ENCODE measurements at regions of chr6 and their contacts with region 1.

Region 1: GRCh38 chr6:10694302-10695085 is at the starts of genes C6orf52 and PAK1IP1:
- DNase-seq: peak; percentile 94
- H3K4me3 Mint-ChIP-seq: peak within 1 kb of the TSS; percentile 97
- H3K27ac Mint-ChIP-seq: peak within 1 kb of the TSS; percentile 98
- H3K4me1 Mint-ChIP-seq: peaks cover 40% of the 10 kb centered on the region
- H3K27me3 Mint-ChIP-seq: no peaks in the 10 kb centered on the region
- total RNA-seq, gene C6orf52: 1.3 to 3.9 TPM
- total RNA-seq, gene PAK1IP1: 28.6 to 29.2 TPM

Region 2: GRCh38 chr6:10404107-10404798 is 290.2 kb before region 1 on chr6:
- CTCF ChIA-PET with region 1: no interaction called
- intact Hi-C with region 1: loop called (anchors 1 kb)
- DNase-seq: peak; percentile 95
- H3K4me3 Mint-ChIP-seq: peak overlapping the region; percentile 84
- H3K27ac Mint-ChIP-seq: peak overlapping the region; percentile 59
- H3K4me1 Mint-ChIP-seq: peaks cover 7% of the 10 kb centered on the region
- H3K27me3 Mint-ChIP-seq: peaks cover 63% of the 10 kb centered on the region

Region 3: GRCh38 chr6:10528170-10528981 is 166.1 kb before region 1 on chr6:
- CTCF ChIA-PET with region 1: interaction called, 4 read pairs
- intact Hi-C with region 1: loop called (anchors 1 kb)
- DNase-seq: peak; percentile 38
- H3K4me3 Mint-ChIP-seq: peak overlapping the region; percentile 80
- H3K27ac Mint-ChIP-seq: peak overlapping the region; percentile 71
- H3K4me1 Mint-ChIP-seq: peaks cover 48% of the 10 kb centered on the region
- H3K27me3 Mint-ChIP-seq: no peaks in the 10 kb centered on the region

Region 4: DNA sequence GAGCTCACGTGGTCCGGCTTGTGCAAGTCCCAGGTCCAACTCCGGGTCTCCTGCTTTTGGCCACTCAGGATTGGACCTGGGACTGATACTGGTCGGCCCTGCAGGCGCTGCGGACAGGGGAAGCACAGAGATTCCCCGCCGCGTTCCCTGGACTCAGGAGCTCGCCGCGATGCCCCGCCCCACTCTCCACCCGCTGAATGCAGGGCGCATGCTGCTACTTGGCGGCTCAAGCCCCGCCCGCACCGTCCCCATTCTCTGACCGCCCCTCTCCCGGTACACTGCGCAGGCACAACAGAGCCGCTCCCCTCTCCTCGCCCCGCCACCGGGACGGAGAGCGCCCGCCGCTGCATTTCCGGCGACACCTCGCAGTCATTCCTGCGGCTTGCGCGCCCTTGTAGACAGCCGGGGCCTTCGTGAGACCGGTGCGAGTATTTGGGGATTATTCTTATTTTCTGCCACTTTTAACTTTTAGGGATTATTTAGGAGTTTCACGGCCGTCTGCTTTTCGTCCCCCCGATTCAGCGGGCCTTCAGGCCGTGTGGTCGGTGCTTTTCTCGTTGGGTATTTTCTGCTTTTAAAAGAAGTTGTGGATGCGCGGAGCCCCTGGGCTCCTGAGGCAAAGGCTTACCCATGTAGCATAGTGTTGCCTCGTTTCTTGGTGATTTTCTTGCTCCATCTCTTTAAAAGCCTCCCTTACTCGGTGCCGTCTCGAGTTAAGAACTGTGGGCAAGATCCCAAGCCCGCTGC is 28.5 kb after region 1 on chr6 and contains the start of gene TMEM14C:
- CTCF ChIA-PET with region 1: interaction called, 12 read pairs
- intact Hi-C with region 1: loop called (anchors 1 kb)
- DNase-seq: peak; percentile 94
- H3K4me3 Mint-ChIP-seq: peak within 1 kb of the TSS; percentile 89
- H3K27ac Mint-ChIP-seq: peak within 1 kb of the TSS; percentile 91
- H3K4me1 Mint-ChIP-seq: peaks cover 44% of the 10 kb centered on the region
- H3K27me3 Mint-ChIP-seq: no peaks in the 10 kb centered on the region
- total RNA-seq, gene TMEM14C: 77.0 to 81.1 TPM

Region 5: GRCh38 chr6:10800829-10801535 is 106.5 kb after region 1 on chr6:
- CTCF ChIA-PET with region 1: no interaction called
- intact Hi-C with region 1: loop called (anchors 1 kb)
- DNase-seq: peak; percentile 75
- H3K4me3 Mint-ChIP-seq: no peak overlapping the region
- H3K27ac Mint-ChIP-seq: no peak overlapping the region
- H3K4me1 Mint-ChIP-seq: no peaks in the 10 kb centered on the region
- H3K27me3 Mint-ChIP-seq: no peaks in the 10 kb centered on the region

Region 6: GRCh38 chr6:11537229-11538051 is 842.9 kb after region 1 on chr6 and contains the start of gene TMEM170B:
- CTCF ChIA-PET with region 1: no interaction called
- intact Hi-C with region 1: loop called (anchors 5 kb)
- DNase-seq: peak; percentile 84
- H3K4me3 Mint-ChIP-seq: peak within 1 kb of the TSS; percentile 78
- H3K27ac Mint-ChIP-seq: no peak within 1 kb of the TSS
- H3K4me1 Mint-ChIP-seq: peaks cover 9% of the 10 kb centered on the region
- H3K27me3 Mint-ChIP-seq: peaks cover 6% of the 10 kb centered on the region
- total RNA-seq, gene TMEM170B: 0.40 to 0.57 TPM